ENCODE measurements at regions of chr17 and their contacts with region 1.

Region 1: DNA sequence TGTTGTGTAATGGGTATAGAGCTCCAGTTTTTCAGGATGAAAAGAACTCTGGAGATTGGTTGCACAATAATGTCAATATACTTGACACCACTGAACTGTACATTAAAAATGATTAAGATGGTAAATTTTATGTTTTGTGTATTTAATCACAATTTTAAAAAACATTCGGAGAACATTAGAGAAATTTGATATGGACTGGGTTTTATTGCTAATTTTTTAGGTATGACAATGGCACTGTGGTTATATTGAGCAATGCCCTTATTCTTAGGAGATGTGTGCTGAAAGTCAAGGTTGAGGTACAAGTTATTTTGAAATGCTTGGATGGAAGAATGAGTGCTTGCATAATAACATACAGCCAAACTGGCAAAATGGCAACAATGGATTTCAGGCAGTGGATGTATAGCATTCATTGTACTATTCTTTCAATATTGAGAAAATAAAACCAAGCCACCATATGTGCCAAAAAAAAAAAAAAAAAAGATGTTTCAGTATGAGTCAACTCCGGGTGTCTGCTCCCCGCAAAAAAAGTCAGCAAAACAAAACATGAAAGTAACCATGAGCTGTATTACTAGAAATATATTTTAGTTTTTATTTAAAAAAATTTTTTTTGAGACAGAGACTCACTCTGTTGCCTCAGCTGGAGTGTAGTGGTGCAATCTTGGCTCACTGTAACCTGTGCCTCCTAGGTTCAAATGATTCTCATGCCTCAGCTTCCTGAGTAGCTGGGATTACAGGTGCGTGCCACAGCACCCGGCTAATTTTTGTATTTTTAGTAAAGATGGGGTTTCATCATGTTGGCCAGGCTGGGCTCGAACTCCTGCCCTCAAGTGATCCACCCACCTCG is 19.8 kb downstream of the HOXB1 start:
- DNase-seq: peak in 3 of 9 experiments; percentile 35 to 61 (median 48)
- ATAC-seq: peak; percentile 71
- H3K4me3 ChIP-seq: no peak overlapping the region
- H3K4me3 Mint-ChIP-seq: no peak overlapping the region
- H3K27ac ChIP-seq: no peak overlapping the region
- H3K27ac Mint-ChIP-seq: no peak overlapping the region
- H3K4me1 ChIP-seq: peaks cover 18% of the 10 kb centered on the region
- H3K4me1 Mint-ChIP-seq: peaks cover 36% of the 10 kb centered on the region
- H3K27me3 ChIP-seq: peaks cover 3 to 4% of the 10 kb centered on the region in 2 experiments
- H3K27me3 Mint-ChIP-seq: peaks cover 5% of the 10 kb centered on the region
- CTCF ChIP-seq: no peak

Region 2: GRCh38 chr17:48270896-48271295 is 240.1 kb before region 1 on chr17:
- CTCF ChIA-PET with region 1: no interaction called
- POLR2A ChIA-PET with region 1: no interaction called
- intact Hi-C with region 1: no loop called
- DNase-seq: no peak
- ATAC-seq: no peak
- H3K4me3 ChIP-seq: no peak overlapping the region
- H3K4me3 Mint-ChIP-seq: no peak overlapping the region
- H3K27ac ChIP-seq: no peak overlapping the region
- H3K27ac Mint-ChIP-seq: no peak overlapping the region
- H3K4me1 ChIP-seq: no peaks in the 10 kb centered on the region
- H3K4me1 Mint-ChIP-seq: peaks cover 23% of the 10 kb centered on the region
- H3K27me3 ChIP-seq: no peaks in the 10 kb centered on the region
- H3K27me3 Mint-ChIP-seq: no peaks in the 10 kb centered on the region
- CTCF ChIP-seq: no peak

Region 3: DNA sequence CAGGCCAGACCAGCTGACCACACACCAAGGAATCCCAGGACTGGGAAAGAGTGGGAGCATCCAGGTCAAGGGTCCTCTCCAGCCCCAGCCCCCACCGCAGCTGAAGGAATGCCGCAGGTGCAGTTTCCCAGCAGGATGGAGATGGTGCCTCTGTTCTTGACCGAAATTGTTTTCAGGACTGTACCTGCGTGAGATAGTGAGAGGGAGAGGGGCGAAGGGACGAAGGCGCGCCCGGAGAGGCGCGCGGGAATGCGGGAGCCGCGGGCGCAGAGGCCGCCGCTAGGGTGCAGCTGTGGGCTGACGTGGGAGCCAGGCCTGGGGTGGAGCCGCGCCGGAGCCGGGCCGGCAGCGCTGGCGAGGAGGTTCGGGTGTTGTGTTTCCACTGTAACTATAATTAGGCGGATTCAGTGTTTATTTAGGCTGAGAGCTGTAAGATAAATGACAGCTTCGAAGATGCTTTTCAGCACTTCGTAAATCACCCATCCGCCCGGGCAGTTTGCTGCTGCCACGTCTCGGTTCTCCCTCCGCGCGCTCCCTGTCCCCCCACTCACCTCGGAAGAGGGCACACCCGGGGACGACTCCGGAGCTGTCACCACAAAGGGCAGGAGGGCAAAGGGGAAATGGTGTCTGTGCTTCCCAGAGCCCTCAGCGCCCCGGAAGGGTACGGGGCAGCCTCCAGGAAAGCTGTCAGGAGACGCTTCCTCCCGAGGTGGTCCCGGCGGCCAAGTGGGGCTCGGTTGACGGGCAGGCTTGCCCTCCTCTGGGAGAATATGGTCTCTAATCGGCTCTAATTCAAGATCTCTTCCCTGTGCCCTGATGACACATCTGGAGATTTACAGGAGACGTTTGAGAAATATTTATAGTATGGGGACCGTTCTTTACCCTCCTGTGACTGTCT is 18.3 kb before region 1 on chr17:
- CTCF ChIA-PET with region 1: interaction called, 4 read pairs
- POLR2A ChIA-PET with region 1: interaction called, 11 read pairs
- intact Hi-C with region 1: no loop called
- DNase-seq: peak; percentile 49 to 80 (median 67)
- ATAC-seq: peak; percentile 96
- H3K4me3 ChIP-seq: peak overlapping the region; percentile 38 to 41
- H3K4me3 Mint-ChIP-seq: peak overlapping the region; percentile 61
- H3K27ac ChIP-seq: no peak overlapping the region
- H3K27ac Mint-ChIP-seq: no peak overlapping the region
- H3K4me1 ChIP-seq: no peaks in the 10 kb centered on the region
- H3K4me1 Mint-ChIP-seq: peaks cover 5% of the 10 kb centered on the region
- H3K27me3 ChIP-seq: peaks cover 0 to 7% of the 10 kb centered on the region in 2 experiments
- H3K27me3 Mint-ChIP-seq: peaks cover 26% of the 10 kb centered on the region
- CTCF ChIP-seq: peak; percentile 83

Measured in CD8-positive, alpha-beta T cell (primary cell).